ENCODE measurements at regions of chr5 and their contacts with region 1.

Region 1: DNA sequence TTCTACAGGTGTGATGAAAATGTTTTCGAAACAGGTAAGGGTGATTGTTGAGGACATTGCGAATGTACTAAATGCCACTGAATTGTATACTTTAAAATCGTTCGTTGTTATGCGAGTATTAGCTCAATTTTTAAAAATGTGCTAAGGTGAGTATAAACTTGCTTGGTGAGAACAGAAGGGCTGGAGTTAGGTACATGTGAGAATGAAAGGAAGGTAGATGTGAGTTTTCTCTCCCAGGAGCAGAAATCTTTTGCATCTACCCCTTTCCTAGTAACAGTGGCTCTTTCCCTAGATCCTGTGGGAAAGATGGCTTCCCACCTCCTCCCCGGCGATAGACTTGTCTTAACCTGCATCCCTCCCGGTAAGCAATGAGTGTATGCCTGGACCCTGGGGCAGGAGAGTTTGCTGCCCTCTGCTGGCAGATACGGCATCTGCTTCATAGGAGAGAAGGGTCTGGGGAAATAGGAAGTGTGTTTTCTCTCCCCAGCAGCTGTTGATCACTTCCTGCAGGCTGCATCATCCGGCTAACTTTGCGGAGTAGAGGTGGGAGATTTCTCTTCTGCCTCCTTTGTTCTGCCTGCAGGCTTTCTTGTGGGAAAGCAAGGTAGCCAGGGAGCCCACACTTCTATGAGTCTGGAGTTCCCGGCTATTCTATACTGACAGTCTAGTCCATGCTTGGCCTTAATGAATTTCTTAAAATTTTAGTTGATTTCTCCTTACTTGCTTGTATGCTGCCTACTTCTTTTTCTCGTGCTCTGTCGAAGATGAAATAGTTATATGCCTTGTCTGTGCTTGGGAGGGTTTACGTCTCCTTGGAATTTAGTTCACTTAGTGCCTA is 373.3 kb upstream of the SEMA6A start:
- DNase-seq: peak; percentile 69
- H3K4me3 Mint-ChIP-seq: no peak overlapping the region
- H3K27ac Mint-ChIP-seq: no peak overlapping the region
- H3K4me1 Mint-ChIP-seq: no peaks in the 10 kb centered on the region
- H3K27me3 Mint-ChIP-seq: no peaks in the 10 kb centered on the region

Region 2: DNA sequence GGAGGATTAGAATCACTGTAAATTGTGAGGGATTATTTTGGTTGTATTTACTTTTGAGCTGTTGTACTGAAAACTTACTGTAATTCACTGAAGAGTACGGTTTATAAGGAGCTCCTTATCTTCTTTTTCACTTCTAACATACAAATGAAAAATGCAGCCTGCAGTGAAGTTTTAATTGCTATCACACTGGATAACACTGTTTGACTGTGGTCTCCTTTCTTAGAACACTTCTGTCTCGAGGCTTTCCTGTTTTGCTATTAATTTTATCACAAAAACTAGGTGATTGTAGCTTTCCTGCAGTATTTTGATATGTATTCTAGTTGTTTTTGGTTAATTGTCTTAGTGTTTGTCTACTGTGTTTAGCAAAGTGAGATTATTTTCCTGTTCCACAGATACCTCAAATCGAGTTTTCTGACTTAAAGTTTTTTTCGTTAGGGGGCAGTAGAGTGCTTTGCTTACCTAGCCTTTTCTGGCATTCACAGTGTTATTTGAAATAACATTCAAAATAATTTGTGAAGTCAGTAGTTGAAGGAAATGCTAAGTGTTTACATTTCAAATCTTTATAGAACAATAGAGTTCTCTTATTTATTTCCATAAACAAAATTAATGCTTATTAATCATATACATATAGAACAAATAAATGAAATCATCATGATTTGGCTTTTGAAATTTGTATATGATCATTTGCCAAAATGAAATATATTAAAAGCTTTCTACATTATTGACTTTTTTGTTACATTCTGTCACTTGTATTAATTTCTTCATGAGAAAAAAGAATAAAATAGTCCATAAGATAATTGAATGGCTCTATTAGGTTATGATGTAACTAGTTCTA is 810.1 kb before region 1 on chr5:
- CTCF ChIA-PET with region 1: interaction called, 17 read pairs
- DNase-seq: no peak
- H3K4me3 Mint-ChIP-seq: no peak overlapping the region
- H3K27ac Mint-ChIP-seq: no peak overlapping the region
- H3K4me1 Mint-ChIP-seq: peaks cover 12% of the 10 kb centered on the region
- H3K27me3 Mint-ChIP-seq: no peaks in the 10 kb centered on the region